ENCODE measurements at regions of chr2 and their contacts with region 1.

Region 1: DNA sequence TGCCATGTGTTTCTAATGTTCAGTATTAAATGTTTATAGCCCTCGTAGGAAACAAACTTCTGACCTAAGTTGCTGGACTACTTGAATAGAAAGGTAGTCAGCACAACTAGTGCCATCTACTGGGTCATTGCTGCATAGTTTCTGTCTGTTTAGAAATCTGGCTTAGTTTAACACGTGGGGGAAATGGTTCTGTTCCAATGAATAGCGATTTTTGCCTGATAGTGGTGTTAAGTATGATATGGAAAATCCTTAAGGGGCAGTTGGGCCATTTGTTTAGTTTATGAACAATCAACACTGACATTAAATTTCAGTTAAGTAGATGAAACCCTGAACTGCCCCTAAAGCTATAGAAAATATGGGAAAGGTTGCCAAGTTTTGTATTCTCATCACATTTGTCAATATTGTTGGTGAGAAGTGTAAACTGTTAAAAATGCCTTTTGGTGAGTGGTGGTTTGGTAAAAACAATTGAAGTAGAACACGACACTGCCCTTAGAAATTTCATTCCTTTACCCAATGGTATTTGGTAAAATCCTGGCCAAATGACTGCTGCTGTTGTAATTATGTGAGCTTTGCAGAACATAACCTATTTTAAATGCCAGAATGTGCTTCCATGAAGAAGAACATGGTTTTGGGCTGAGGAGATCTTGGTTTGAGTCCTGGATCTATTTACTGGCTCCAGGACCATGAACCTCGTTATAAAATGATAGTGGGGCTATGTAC is 13.2 kb downstream of the NABP1 start:
- DNase-seq: no peak
- ATAC-seq: peak; percentile 83

Region 2: DNA sequence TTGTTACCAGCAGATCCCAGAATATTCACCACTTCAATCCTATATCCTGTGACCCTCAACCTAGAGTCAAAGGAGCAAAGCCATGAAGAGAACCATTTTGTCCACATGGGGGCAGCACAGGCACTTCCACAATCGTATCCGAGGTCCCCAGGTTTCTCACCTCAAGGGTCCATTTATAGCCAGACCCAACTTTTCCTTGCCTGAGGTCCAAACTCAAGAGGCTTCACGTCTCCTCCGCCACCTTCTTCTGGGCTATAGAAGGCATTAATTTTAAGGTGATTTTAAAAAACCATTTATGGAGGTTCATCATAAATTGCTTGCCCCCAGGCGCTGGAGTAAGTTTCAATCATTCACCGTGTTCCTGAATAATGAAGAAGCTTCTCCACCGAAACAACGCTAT is 124.8 kb before region 1 on chr2:
- intact Hi-C with region 1: loop called (anchors 5 kb)
- DNase-seq: peak; percentile 43
- ATAC-seq: peak; percentile 74

Measured in left ventricle myocardium superior (tissue), 1 donor.